ENCODE measurements at regions of chr3 and their contacts with region 1.

Region 1: DNA sequence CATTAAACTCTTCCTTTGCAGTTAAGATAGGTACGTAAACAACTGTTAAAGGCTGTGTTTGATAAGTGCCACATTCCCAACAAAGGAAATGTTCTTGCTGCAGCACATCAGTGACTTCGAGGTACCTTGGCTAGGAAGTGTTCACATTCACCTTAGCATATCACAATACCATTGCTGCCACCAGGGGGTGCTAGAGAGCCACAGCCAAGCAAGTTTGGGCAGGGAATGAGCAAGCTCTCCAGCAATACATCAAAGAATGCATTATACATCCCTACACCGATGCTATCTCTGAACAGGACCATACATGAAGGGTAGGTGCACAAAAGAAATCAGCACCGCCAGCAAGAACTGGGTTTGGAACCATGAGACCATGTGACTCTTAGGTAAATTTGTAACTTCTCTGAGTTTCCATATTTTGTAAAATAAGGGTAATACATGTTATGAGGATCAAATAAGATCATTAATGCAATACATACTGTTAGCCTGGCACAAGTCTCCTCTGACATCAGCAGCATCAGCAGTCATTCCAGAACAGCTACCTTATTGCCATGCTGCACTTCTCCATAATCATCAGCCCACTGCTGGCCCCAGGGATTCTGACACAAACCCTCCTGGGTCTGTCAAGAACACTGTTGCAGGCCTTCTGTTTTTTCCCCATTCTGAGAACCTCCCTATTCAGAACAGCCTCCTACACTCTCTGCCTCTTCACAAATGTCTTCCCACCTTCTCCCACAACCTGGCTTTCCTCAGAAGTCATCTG is 37.6 kb downstream of the RYK start:
- DNase-seq: peak; percentile 87
- H3K4me3 Mint-ChIP-seq: no peak overlapping the region
- H3K27ac Mint-ChIP-seq: peak overlapping the region; percentile 36
- H3K4me1 Mint-ChIP-seq: peaks cover 26% of the 10 kb centered on the region
- H3K27me3 Mint-ChIP-seq: no peaks in the 10 kb centered on the region
- CTCF ChIP-seq: peak; percentile 91

Region 2: GRCh38 chr3:133821767-133822638 is 391.1 kb before region 1 on chr3:
- CTCF ChIA-PET with region 1: interaction called, 12 read pairs
- POLR2A ChIA-PET with region 1: no interaction called
- intact Hi-C with region 1: loop called (anchors 10 kb)
- DNase-seq: peak; percentile 93
- H3K4me3 Mint-ChIP-seq: no peak overlapping the region
- H3K27ac Mint-ChIP-seq: no peak overlapping the region
- H3K4me1 Mint-ChIP-seq: peaks cover 13% of the 10 kb centered on the region
- H3K27me3 Mint-ChIP-seq: no peaks in the 10 kb centered on the region
- CTCF ChIP-seq: peak; percentile 26

Region 3: GRCh38 chr3:133943639-133944141 is 269.4 kb before region 1 on chr3:
- CTCF ChIA-PET with region 1: interaction called, 17 read pairs
- POLR2A ChIA-PET with region 1: interaction called, 4 read pairs
- intact Hi-C with region 1: no loop called
- DNase-seq: peak; percentile 92
- H3K4me3 Mint-ChIP-seq: peak overlapping the region; percentile 39
- H3K27ac Mint-ChIP-seq: peak overlapping the region; percentile 52
- H3K4me1 Mint-ChIP-seq: peaks cover 55% of the 10 kb centered on the region
- H3K27me3 Mint-ChIP-seq: no peaks in the 10 kb centered on the region
- CTCF ChIP-seq: no peak

Region 4: DNA sequence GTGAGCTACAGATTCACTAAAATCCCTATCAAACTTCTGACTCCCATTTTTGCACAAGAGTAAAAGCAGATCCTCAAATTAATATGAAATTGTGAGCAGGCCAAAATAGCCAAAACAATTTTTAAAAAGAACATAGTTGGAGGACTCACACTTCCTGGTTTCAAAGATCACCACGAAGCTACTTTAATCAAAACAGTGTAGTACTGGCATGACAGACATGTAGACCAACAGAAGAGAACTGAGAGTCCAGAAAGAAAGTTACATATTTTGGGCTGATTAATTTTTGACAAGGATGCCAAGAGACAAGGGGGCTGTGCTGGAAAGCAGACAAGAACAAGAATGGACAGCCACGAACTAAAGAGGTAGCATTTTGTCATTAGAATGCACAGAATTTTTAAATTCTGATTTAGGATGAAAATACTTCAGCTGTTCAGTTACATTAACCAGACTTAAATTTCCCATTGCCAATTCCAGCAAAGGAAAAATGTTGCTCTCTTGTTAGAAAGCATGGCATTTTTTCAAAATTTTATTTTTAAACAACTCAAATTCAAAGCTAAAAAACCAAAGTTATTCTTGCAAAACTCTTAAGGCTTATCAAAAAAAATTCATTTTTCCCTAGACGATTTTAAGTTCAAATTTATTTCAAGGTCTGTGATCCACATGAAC is 23.6 kb after region 1 on chr3:
- CTCF ChIA-PET with region 1: interaction called, 33 read pairs
- POLR2A ChIA-PET with region 1: interaction called, 11 read pairs
- intact Hi-C with region 1: no loop called
- DNase-seq: no peak
- H3K4me3 Mint-ChIP-seq: no peak overlapping the region
- H3K27ac Mint-ChIP-seq: peak overlapping the region; percentile 86
- H3K4me1 Mint-ChIP-seq: peaks cover 69% of the 10 kb centered on the region
- H3K27me3 Mint-ChIP-seq: no peaks in the 10 kb centered on the region
- CTCF ChIP-seq: no peak

Region 5: DNA sequence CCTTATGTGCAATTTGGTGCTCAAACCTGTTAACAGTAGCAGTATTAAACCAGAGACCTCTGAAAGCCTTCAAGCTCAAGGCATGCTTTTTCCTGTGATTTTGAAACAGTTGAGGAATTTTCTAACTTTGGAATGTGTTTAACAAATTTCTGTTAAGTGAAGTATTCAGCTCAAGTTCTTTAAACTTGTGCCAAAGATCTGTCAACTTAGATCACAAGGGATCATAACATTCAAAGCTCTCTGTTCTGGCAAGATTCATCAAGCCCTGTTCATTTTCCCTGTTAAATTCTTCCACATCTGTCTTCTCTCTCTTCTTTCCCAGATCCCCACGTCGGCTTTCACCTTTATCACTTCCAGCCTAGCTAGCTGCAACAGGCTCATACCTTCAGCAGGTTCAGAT is 66.4 kb after region 1 on chr3:
- CTCF ChIA-PET with region 1: interaction called, 11 read pairs
- POLR2A ChIA-PET with region 1: no interaction called
- intact Hi-C with region 1: no loop called
- DNase-seq: no peak
- H3K4me3 Mint-ChIP-seq: no peak overlapping the region
- H3K27ac Mint-ChIP-seq: no peak overlapping the region
- H3K4me1 Mint-ChIP-seq: peaks cover 6% of the 10 kb centered on the region
- H3K27me3 Mint-ChIP-seq: peaks cover 10% of the 10 kb centered on the region
- CTCF ChIP-seq: no peak

Region 6: DNA sequence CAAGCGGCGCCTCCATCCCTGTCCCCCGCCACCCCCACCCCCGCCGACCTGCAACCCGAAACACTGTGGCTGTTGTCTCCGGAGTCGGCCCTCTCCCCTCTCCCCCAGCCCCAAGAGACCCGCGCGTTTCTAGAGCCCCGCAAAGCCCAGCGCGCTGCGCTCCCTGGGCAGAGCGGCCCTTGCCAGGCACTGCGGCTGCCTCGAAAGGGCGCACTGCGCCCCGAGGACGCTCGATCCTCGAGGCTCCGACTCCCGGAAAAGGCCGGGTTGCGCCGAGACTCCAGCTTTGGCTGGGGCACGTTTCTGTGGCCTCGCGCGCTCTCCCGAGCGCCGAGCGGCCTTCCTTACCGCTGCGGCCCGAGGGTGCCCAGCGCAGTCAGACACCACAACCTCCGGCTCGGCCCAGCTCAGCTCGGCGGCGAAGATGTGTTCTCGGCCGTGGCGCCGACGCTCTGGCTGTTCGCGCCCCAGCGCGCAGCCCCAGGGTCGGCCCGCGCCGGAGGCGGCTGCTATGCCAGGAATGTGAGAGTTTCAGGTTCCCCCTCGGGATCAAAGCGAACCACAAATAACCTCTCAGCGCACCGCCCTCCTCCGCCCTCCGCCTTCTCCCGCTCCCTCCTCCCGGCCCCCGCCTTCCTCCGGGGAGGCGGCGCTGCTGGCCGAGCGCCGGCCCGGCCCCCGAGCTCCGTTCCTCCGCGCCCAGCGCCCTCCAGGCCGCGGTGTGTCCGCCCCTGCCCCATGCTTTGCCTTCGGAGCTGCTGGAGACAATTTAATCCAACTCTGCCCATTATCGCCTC is 161.1 kb after region 1 on chr3 and contains the start of gene AMOTL2:
- CTCF ChIA-PET with region 1: interaction called, 6 read pairs
- POLR2A ChIA-PET with region 1: interaction called, 5 read pairs
- intact Hi-C with region 1: loop called (anchors 5 kb)
- DNase-seq: peak; percentile 93
- H3K4me3 Mint-ChIP-seq: peak within 1 kb of the TSS; percentile 93
- H3K27ac Mint-ChIP-seq: peak within 1 kb of the TSS; percentile 88
- H3K4me1 Mint-ChIP-seq: peaks cover 48% of the 10 kb centered on the region
- H3K27me3 Mint-ChIP-seq: no peaks in the 10 kb centered on the region
- CTCF ChIP-seq: no peak
- total RNA-seq, gene AMOTL2: 92.6 and 137 TPM in 2 replicates

Region 7: DNA sequence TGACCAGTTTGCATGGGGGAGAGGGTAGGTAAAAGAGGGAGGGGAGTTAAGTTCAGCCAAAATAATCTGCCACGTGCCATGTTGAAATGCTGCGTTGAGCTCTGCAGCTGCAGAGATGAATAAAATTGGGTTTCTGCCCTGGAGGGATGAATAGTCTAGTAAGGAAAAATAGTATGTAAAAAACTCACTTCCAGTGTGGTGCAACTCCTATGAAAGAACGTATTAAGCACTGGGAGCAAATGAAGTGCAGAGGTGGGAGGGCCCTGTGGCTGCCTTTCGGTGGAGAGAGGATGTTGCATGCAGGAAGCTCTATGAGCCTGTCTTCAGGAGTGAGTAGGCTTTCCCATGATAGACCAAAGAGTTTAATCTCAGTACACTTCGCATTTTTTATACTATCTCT is 281.4 kb after region 1 on chr3:
- CTCF ChIA-PET with region 1: interaction called, 5 read pairs
- POLR2A ChIA-PET with region 1: no interaction called
- intact Hi-C with region 1: loop called (anchors 5 kb)
- DNase-seq: no peak
- H3K4me3 Mint-ChIP-seq: no peak overlapping the region
- H3K27ac Mint-ChIP-seq: no peak overlapping the region
- H3K4me1 Mint-ChIP-seq: no peaks in the 10 kb centered on the region
- H3K27me3 Mint-ChIP-seq: no peaks in the 10 kb centered on the region
- CTCF ChIP-seq: no peak

Measured in MCF 10A (cell line).